OCI-LY7 (cell line): ENCODE measurements at regions of chr22 and their contacts with region 1.

Region 1: GRCh38 chr22:36977947-36978660 is 41.1 kb downstream of the TST start:
- DNase-seq: peak; percentile 93
- H3K4me3 ChIP-seq: peak overlapping the region; percentile 66
- H3K27ac ChIP-seq: no peak overlapping the region
- H3K4me1 ChIP-seq: peaks cover 5% of the 10 kb centered on the region
- CTCF ChIP-seq: peak; percentile 92

Region 2: DNA sequence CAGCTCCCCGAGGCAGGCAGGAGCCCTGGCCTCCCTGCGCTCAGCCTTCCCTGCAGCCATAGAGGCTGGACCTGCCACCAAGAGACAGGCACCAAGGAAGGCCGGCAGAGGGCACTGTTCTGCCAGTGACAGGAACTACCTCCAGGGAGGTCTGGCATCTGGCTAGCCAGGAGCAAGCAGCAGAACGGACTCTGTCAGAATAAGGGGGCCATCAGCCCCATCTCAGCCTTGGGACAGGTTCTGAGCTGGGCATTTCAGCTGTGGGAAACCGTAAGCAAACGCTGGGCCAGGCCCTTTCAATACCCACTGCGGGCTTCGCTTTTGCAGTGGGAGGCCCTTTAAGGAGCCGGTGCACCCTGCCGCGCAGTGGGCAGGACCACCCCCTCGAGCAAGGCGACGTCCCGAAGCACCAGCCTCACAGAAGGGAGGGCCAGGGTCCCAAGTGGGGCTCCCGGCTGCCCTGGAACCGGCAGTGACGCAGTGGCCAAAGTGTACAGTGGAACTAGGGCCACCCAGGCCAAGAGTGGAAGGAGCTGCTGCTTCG is 220.4 kb before region 1 on chr22:
- CTCF ChIA-PET with region 1: no interaction called
- POLR2A ChIA-PET with region 1: no interaction called
- intact Hi-C with region 1: loop called (anchors 1 kb)
- DNase-seq: peak; percentile 77
- H3K4me3 ChIP-seq: no peak overlapping the region
- H3K27ac ChIP-seq: no peak overlapping the region
- H3K4me1 ChIP-seq: no peaks in the 10 kb centered on the region
- CTCF ChIP-seq: peak; percentile 85

Region 3: DNA sequence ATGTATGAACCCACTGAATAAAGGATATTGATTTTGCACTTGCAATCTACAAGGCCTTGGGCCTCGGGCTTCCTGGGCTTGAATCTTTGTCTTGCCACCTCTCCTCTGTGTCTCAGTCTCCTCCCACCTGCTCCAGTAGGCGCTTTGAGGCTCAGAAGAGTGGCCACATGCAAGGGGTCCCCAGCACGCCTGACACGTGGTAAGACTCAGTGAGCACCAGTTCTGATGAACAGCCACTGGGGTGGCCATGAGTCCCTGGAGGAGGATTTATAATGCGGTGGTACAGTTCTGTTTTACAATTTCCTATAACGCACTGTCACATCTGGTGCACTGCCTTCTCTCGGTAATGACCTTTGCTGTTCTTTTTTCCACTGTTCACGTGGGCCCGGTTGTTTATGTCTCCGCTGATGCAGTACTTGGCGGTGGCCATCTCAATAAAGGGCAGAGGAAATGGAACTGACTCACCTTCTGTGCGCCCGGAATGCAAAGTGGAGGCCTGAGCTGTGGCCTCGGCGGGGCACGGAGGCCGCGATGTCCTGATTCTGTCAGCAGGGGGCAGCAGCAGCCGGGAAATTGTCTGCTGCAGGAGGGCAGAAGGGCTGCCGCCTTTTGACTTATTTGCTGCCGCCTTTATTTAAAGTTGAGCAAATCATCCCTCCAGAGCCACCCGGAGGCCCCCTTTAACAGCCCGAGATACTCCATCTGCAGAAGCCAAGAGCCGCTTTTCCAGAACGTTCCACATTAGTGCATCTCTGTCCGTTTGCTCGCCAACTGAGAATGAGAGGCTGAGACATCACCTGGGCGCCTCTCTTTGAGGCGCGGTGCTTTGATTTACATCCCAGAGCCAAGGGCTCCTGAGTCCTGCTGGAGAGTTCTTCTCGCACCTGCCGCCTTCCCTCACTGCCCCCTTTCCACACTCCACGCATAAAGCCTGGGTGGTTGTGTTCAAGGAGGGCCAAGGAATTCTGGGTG is 196.2 kb before region 1 on chr22:
- CTCF ChIA-PET with region 1: interaction called, 5 read pairs
- POLR2A ChIA-PET with region 1: no interaction called
- intact Hi-C with region 1: loop called (anchors 1 kb)
- DNase-seq: peak; percentile 80
- H3K4me3 ChIP-seq: no peak overlapping the region
- H3K27ac ChIP-seq: no peak overlapping the region
- H3K4me1 ChIP-seq: peaks cover 6% of the 10 kb centered on the region
- CTCF ChIP-seq: peak; percentile 97

Region 4: GRCh38 chr22:36856121-36856791 is 121.8 kb before region 1 on chr22:
- CTCF ChIA-PET with region 1: interaction called, 12 read pairs
- POLR2A ChIA-PET with region 1: interaction called, 4 read pairs
- intact Hi-C with region 1: loop called (anchors 1 kb)
- DNase-seq: peak; percentile 93
- H3K4me3 ChIP-seq: peak overlapping the region; percentile 24
- H3K27ac ChIP-seq: no peak overlapping the region
- H3K4me1 ChIP-seq: peaks cover 60% of the 10 kb centered on the region
- CTCF ChIP-seq: peak; percentile 100

Region 5: GRCh38 chr22:36913427-36914389 is 64.4 kb before region 1 on chr22 and contains the start of gene CSF2RB:
- CTCF ChIA-PET with region 1: no interaction called
- POLR2A ChIA-PET with region 1: interaction called, 6 read pairs
- intact Hi-C with region 1: loop called (anchors 5 kb)
- DNase-seq: peak; percentile 55
- H3K4me3 ChIP-seq: peak within 1 kb of the TSS; percentile 64
- H3K27ac ChIP-seq: peak within 1 kb of the TSS; percentile 47
- H3K4me1 ChIP-seq: peaks cover 35% of the 10 kb centered on the region
- CTCF ChIP-seq: no peak
- total RNA-seq, gene CSF2RB: 6.2 and 7.6 TPM in 2 replicates